Calu3 (cell line): ENCODE measurements at regions of chr5 and their contacts with region 1.

Region 1: DNA sequence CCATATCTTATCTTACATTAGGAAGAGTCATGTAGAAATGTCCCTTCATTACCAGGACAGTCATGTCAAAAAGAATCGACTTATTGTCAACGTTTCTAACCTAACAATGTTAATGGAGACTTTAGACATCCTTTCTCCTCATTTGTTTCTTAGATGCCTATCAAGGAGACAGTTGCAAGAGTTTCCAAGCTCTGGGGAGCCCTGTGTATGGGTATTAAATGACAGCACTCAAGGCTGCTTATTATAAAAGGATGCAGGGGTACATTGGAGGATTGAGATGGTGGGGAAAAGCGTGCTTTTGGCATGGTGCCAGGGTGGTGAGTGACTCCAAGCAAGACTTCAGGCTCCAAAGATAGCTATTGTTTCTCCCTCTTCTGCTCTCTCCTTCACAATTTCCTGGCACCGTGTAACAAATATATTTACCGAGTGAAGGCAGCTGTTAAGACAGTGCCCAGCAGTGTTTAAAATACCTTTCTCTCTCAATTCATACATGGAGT is 461.3 kb upstream of the CLINT1 start:
- DNase-seq: peak; percentile 18
- H3K4me3 Mint-ChIP-seq: no peak overlapping the region
- H3K27ac Mint-ChIP-seq: no peak overlapping the region
- H3K4me1 Mint-ChIP-seq: no peaks in the 10 kb centered on the region
- H3K27me3 Mint-ChIP-seq: no peaks in the 10 kb centered on the region
- CTCF ChIP-seq: no peak

Region 2: GRCh38 chr5:158344376-158344775 is 24.1 kb after region 1 on chr5:
- CTCF ChIA-PET with region 1: interaction called, 10 read pairs
- intact Hi-C with region 1: no loop called
- DNase-seq: no peak
- H3K4me3 Mint-ChIP-seq: no peak overlapping the region
- H3K27ac Mint-ChIP-seq: no peak overlapping the region
- H3K4me1 Mint-ChIP-seq: no peaks in the 10 kb centered on the region
- H3K27me3 Mint-ChIP-seq: no peaks in the 10 kb centered on the region
- CTCF ChIP-seq: no peak

Region 3: GRCh38 chr5:158660726-158661125 is 340.5 kb after region 1 on chr5:
- CTCF ChIA-PET with region 1: interaction called, 11 read pairs
- intact Hi-C with region 1: no loop called
- DNase-seq: no peak
- H3K4me3 Mint-ChIP-seq: no peak overlapping the region
- H3K27ac Mint-ChIP-seq: no peak overlapping the region
- H3K4me1 Mint-ChIP-seq: no peaks in the 10 kb centered on the region
- H3K27me3 Mint-ChIP-seq: no peaks in the 10 kb centered on the region
- CTCF ChIP-seq: no peak

Region 4: DNA sequence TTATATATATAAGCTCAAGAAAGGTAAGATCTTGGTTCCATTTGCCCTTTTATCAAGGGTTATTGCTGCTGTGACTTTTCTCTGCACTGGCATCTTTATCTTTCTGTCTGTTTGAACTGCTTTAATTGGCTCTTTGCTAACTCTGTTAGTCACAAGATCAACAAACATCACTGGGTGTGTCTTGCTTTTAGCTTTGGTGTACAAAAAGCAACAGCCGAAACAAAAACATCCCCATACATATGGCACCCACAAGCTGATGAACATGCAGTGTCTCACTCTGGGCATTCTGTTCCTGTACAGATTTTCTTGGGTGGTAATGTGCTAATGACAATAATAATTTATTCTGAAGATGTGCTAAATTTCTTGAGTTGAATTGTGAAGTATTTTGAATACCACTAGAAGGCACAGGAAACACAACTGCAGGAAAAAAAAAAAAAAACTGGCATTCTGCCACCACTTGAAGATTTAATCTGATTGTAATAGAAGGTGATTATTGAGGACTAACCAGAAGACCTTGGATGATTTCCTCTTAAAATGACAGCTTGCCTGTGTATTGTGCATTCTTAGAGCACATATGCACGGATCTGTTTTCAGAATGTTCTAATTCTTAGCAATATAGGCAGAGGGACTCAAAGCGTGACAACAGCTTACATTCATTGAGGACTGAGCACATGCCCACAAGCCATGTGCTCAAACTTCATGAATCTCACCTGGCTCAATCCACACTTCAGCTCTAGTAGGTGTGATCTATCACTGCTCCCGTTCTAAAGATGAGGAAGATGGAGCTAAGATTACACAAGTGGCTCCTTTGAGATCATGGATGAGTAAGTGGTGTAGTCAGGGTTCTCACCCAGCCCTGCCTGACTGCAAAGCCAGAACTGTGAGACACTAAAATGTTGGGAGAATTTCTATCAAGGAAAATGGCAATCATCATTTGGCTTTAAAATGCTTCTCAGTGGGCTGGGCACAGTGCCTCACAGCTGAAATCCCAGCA is 683.1 kb after region 1 on chr5:
- CTCF ChIA-PET with region 1: no interaction called
- intact Hi-C with region 1: no loop called
- DNase-seq: peak; percentile 47
- H3K4me3 Mint-ChIP-seq: no peak overlapping the region
- H3K27ac Mint-ChIP-seq: no peak overlapping the region
- H3K4me1 Mint-ChIP-seq: peaks cover 19% of the 10 kb centered on the region
- H3K27me3 Mint-ChIP-seq: peaks cover 13% of the 10 kb centered on the region
- CTCF ChIP-seq: no peak